Activated CD4-positive, alpha-beta memory T cell treated with anti-CD3 and anti-CD28 coated beads for 36 hours (primary cell): ENCODE measurements at regions of chr15 and their contacts with region 1.

Region 1: DNA sequence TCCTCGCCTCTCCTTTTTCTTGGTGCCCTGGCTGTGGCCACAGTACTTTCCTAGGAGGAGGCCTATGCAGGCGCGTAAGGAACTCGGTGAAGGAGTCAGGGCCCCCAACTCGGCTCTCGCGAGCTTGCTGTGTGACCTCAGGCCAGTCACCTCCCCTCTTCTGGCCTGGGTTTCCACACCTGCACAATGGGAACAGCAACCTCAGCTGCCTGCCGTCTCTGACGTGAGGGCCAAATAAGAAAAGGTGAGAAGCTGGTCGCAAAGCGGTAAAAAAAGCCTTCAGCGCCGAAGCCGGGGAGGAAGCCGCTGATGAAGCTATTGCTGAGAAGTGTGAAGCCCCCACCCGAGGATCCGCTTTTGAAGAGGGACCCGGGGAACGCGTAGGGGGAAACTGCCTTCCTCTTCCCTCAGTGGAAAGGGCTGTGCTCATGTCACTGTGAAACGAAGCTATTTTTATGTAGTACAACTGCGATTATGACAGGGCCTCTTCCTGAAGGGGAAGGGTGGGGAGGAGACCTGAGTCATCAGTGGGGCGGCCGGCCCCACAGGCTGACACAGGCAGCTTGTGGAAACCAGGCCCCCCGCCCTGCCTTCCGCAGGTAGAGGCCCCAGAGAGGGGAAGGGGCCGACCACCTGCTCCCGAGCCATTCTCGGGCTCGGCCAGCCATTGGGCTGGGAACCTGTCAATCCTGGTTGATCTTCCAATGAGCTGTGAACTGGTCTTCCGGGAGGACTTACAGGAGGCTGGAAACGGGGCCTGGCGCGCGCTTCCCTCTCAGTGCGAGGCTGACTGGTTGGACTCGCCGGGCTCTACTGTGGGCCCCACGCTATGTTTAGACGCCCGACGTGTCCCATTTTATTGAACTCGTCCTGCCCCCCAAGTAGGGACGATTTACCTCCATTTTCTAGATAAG is 18.0 kb upstream of the ANKDD1A start:
- DNase-seq: peak; percentile 99
- H3K4me3 Mint-ChIP-seq: peak overlapping the region; percentile 95
- H3K27ac Mint-ChIP-seq: peak overlapping the region; percentile 99
- H3K4me1 Mint-ChIP-seq: peaks cover 59% of the 10 kb centered on the region
- H3K27me3 Mint-ChIP-seq: no peaks in the 10 kb centered on the region

Region 2: DNA sequence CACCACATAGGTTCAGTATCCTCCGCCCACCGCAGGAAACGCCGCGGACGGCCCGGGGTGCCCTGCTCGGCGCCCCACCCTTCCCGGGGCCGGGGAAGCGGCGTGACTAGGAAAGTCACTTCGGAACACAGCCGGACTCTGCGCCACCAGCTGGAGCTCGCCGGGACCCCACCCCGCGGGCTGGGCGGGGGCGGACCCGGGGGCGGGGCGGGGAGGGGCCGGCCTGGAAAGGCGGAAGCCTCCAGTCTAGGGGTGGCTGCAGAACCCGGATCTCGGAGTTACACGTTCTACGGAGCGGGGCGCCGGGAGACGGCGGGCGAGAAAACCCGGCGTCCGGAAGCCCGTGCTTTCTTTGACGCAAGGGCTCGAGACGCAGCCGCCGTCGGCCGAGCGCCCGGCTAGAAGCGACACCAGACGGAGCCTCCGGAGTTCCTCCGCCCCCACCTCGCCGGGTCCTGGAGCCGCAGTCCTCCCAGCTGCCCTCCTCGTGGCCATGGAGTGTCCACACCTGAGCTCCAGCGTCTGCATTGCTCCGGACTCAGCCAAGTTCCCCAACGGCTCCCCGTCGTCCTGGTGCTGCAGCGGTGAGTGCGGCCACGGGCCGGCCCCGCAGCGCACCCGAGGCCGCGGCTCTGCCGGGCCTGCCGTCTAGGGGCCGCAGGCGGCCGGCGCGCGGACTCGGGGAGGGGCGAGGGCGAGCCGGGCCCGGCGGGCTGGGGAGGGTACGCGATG is 1389.3 kb before region 1 on chr15 and contains the start of gene USP3:
- CTCF ChIA-PET with region 1: no interaction called
- POLR2A ChIA-PET with region 1: no interaction called
- intact Hi-C with region 1: loop called (anchors 10 kb)
- DNase-seq: peak; percentile 95
- H3K4me3 Mint-ChIP-seq: peak within 1 kb of the TSS; percentile 90
- H3K27ac Mint-ChIP-seq: peak within 1 kb of the TSS; percentile 99
- H3K4me1 Mint-ChIP-seq: peaks cover 80% of the 10 kb centered on the region
- H3K27me3 Mint-ChIP-seq: no peaks in the 10 kb centered on the region
- total RNA-seq, gene USP3: 46.1 to 48.9 TPM

Region 3: DNA sequence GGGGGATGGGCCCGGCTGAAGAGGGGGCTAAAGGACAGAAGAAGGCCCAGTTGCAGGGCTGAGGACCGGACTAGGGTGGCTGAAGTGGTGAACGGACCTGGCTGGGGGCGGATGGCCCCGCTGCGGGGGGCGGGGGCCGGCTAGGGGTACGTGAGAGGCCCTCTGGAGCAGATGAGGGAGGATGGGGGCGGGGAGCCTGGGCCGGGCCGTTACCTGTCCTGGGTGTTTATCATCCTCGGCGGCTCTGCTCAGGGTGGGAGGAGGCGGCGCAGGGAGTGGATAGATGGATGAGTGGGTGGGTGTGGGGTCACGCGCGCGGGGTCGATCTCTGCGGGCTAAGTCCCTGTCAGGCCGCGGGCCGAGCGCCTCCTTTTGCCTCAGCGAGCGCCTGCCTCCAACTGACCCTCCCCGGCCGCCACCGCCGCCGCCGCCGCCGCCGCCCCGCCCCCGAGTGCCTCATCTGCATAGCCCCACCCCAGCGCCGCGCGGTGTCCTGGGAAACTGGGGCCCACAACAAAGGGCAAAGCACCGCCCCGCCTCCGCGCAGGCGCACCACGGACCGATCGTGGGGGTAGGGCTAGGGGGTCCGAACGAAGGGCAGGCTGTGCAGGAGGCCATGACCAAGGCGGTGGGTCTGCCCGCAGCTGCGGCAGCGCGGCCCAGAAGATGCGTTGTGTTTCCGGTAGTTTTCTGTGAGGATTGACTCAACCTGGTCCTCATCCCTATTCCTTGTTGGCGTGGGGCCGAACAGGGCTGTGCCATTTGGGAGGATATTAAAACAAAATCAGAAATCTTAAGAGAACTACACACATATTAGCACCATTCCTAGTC is 190.7 kb before region 1 on chr15:
- CTCF ChIA-PET with region 1: no interaction called
- POLR2A ChIA-PET with region 1: no interaction called
- intact Hi-C with region 1: loop called (anchors 2 kb)
- DNase-seq: peak; percentile 97
- H3K4me3 Mint-ChIP-seq: peak overlapping the region; percentile 83
- H3K27ac Mint-ChIP-seq: peak overlapping the region; percentile 41
- H3K4me1 Mint-ChIP-seq: peaks cover 51% of the 10 kb centered on the region
- H3K27me3 Mint-ChIP-seq: no peaks in the 10 kb centered on the region

Region 4: GRCh38 chr15:64836023-64836536 is 57.7 kb before region 1 on chr15:
- CTCF ChIA-PET with region 1: interaction called, 34 read pairs
- POLR2A ChIA-PET with region 1: interaction called, 10 read pairs
- intact Hi-C with region 1: loop called (anchors 1 kb)
- DNase-seq: no peak
- H3K4me3 Mint-ChIP-seq: peak overlapping the region; percentile 59
- H3K27ac Mint-ChIP-seq: peak overlapping the region; percentile 59
- H3K4me1 Mint-ChIP-seq: peaks cover 40% of the 10 kb centered on the region
- H3K27me3 Mint-ChIP-seq: no peaks in the 10 kb centered on the region

Region 5: GRCh38 chr15:64856429-64857145 is 37.2 kb before region 1 on chr15:
- CTCF ChIA-PET with region 1: interaction called, 10 read pairs
- POLR2A ChIA-PET with region 1: interaction called, 5 read pairs
- intact Hi-C with region 1: no loop called
- DNase-seq: no peak
- H3K4me3 Mint-ChIP-seq: no peak overlapping the region
- H3K27ac Mint-ChIP-seq: peak overlapping the region; percentile 40
- H3K4me1 Mint-ChIP-seq: peaks cover 49% of the 10 kb centered on the region
- H3K27me3 Mint-ChIP-seq: no peaks in the 10 kb centered on the region

Region 6: GRCh38 chr15:64905119-64905831 is 11.5 kb after region 1 on chr15:
- CTCF ChIA-PET with region 1: interaction called, 60 read pairs
- POLR2A ChIA-PET with region 1: interaction called, 36 read pairs
- intact Hi-C with region 1: loop called (anchors 1 kb)
- DNase-seq: peak; percentile 88
- H3K4me3 Mint-ChIP-seq: peak overlapping the region; percentile 72
- H3K27ac Mint-ChIP-seq: peak overlapping the region; percentile 39
- H3K4me1 Mint-ChIP-seq: peaks cover 34% of the 10 kb centered on the region
- H3K27me3 Mint-ChIP-seq: no peaks in the 10 kb centered on the region

Region 7: DNA sequence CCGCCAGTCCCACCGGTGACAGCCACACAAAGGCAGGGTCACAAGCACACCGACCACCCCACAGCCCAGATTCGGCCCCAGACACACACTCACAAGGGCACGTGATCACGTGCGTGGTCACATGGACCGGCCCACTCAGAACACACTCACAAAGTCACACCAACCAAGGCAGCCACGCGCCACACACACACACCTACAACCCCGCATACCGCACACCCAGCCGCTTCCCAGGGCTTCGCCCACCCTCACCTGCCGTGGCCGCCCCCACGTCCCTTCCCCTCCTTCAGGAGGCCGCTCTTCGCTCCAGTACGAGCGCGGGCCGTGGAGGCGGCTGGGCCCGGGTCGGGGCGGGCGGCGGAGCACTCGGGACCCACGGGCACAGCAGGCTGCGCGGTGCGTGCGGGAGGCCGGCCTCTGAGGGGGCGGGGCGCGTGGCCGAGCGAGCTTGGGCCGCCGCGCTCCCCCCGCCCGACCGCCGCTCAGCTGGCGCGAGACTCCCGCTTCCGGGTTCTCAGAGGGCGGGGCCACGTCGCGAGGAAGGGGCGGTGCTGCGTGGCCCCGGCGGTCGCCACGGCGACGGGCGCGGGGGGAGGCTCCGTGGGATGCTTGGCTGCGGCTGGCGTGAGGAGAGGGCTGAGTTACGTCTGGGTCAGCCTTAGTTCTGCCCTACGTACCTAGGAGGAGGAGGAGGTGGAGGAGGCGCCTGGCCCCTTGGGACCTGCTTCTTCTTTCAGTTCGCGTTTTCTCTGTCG is 95.9 kb after region 1 on chr15 and contains the start of gene SPG21:
- CTCF ChIA-PET with region 1: no interaction called
- POLR2A ChIA-PET with region 1: interaction called, 7 read pairs
- intact Hi-C with region 1: loop called (anchors 5 kb)
- DNase-seq: peak; percentile 95
- H3K4me3 Mint-ChIP-seq: peak within 1 kb of the TSS; percentile 96
- H3K27ac Mint-ChIP-seq: peak within 1 kb of the TSS; percentile 82
- H3K4me1 Mint-ChIP-seq: peaks cover 35% of the 10 kb centered on the region
- H3K27me3 Mint-ChIP-seq: no peaks in the 10 kb centered on the region
- total RNA-seq, gene SPG21: 69.3 to 73.0 TPM